ENCODE measurements at regions of chr11 and their contacts with region 1.

Region 1: GRCh38 chr11:95764267-95764898 is 25.2 kb downstream of the FAM76B start:
- DNase-seq: no peak
- H3K4me3 ChIP-seq: no peak overlapping the region
- H3K27ac ChIP-seq: no peak overlapping the region
- H3K4me1 ChIP-seq: no peaks in the 10 kb centered on the region
- H3K27me3 ChIP-seq: no peaks in the 10 kb centered on the region
- CTCF ChIP-seq: peak; percentile 46 to 85 (median 73)
- POLR2A ChIP-seq: no peak

Region 2: GRCh38 chr11:95150946-95151684 is 613.3 kb before region 1 on chr11:
- intact Hi-C with region 1: loop called (anchors 5 kb)
- DNase-seq: peak; percentile 68
- H3K4me3 ChIP-seq: peak overlapping the region; percentile 45 to 66 (median 64)
- H3K27ac ChIP-seq: peak overlapping the region; percentile 89 to 94 (median 93)
- H3K4me1 ChIP-seq: peaks cover 8 to 67% (median 25%) of the 10 kb centered on the region in 3 donors
- H3K27me3 ChIP-seq: no peaks in the 10 kb centered on the region
- CTCF ChIP-seq: peak; percentile 68 to 97 (median 95)
- POLR2A ChIP-seq: peak in 3 of 4 donors; percentile 5 to 81 (median 42)

Region 3: DNA sequence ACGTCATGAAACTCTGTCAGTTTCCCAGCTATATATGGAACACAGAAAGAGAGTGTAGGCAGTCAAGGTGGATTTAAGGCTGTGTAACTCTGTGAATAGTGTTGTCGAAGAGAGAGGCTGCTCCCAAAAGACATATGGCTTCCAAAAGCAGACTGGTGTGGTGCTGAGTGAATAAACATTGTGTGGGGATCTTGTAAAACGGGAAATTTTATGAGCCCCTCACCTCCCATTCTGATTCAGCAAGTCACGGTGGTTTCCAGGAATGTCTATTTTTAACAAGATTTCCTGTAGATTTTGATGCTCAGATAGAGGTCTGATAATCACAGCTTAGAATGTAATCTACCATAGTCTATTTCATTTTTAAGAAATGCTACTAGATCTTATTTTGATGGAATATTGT is 601.3 kb before region 1 on chr11:
- intact Hi-C with region 1: loop called (anchors 5 kb)
- DNase-seq: no peak
- H3K4me3 ChIP-seq: no peak overlapping the region
- H3K27ac ChIP-seq: no peak overlapping the region
- H3K4me1 ChIP-seq: no peaks in the 10 kb centered on the region
- H3K27me3 ChIP-seq: no peaks in the 10 kb centered on the region
- CTCF ChIP-seq: no peak
- POLR2A ChIP-seq: no peak

Region 4: DNA sequence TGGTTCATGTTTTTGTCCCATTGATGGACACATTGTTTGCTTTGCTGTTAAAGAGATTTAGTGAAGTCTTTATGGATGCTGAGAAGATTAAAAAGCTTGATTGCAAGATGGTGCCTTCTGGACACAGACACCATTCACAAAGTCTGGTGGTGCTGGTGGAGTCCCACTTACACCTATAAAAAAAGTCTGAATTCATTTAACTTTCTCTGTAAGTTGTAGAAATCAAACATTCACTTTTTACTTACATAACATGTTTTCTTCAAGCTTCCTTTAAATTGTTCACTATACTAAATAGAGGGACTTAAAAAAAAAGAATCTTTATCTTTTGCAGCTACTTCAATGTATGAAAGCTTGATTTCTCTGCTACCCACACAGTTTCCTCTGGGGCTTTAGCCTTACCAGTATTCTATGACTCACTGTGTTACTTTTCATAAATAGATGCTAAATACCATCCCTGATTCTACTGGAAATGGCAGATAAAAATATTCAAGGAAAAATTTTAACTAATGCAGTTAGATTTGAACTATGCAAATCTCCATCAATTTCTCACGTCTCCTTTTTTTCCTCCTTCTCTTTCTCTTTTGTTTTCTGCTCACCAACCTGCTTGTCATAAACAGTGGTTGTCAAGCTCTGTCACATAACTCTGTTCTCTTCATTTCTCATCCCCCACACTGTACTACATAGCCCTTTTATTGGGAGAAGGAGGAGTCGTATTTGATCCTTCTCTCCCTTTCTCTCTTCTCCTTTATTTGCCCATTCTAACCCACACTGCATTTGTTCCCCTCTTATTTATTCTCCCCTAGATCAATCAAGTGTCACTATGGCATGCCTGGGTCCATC is 64.5 kb before region 1 on chr11:
- intact Hi-C with region 1: loop called (anchors 5 kb)
- DNase-seq: no peak
- H3K4me3 ChIP-seq: no peak overlapping the region
- H3K27ac ChIP-seq: peak overlapping the region in 3 of 4 donors; percentile 27 to 39 (median 31)
- H3K4me1 ChIP-seq: peaks cover 5 to 76% (median 31%) of the 10 kb centered on the region in 3 donors
- H3K27me3 ChIP-seq: no peaks in the 10 kb centered on the region
- CTCF ChIP-seq: no peak
- POLR2A ChIP-seq: no peak

Region 5: DNA sequence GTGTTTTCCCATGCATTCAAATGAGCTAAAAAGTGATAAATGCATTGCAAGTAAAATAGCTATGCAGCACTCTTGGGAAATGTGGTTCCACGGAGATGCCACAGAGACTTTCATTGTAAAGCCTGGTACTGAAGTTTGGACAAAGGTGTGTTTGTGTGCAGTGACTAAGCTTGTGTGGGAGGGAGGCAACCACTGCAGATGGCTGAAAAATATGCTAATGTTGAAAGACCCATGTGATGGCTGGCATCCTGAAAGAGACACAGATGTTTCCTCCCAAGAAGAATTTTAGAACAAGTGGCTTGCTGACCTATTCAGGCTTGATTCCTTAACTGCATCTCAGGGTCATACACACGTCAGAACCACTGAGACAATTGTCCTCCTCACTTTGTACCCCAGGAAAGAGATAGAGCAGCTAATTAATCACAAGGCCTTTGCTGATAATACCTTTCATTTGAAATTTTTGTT is 48.6 kb before region 1 on chr11:
- intact Hi-C with region 1: no loop called
- DNase-seq: no peak
- H3K4me3 ChIP-seq: no peak overlapping the region
- H3K27ac ChIP-seq: no peak overlapping the region
- H3K4me1 ChIP-seq: peaks cover 0 to 4% (median 0%) of the 10 kb centered on the region in 3 donors
- H3K27me3 ChIP-seq: no peaks in the 10 kb centered on the region
- CTCF ChIP-seq: no peak
- POLR2A ChIP-seq: no peak

Region 6: DNA sequence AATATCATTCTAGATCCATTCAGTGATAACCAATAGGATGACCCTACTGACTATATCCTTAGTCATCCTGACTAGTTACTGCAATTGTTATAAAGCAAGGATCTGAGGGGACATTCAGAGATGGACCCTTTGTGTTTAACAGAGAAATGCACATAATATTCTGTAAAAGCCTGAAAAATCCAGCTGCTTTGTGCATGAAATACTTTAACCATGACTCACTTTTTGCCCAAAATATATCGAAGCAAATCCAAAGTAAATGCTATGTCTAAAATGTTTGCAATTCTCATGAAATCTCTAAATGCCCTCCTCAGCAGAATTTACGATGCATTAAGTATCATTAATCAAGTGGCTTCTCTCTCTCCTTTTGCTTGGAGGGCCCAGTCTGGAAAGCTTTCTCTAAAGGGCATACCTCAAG is 338.3 kb after region 1 on chr11:
- intact Hi-C with region 1: no loop called
- DNase-seq: no peak
- H3K4me3 ChIP-seq: no peak overlapping the region
- H3K27ac ChIP-seq: no peak overlapping the region
- H3K4me1 ChIP-seq: peaks cover 0 to 59% (median 18%) of the 10 kb centered on the region in 3 donors
- H3K27me3 ChIP-seq: no peaks in the 10 kb centered on the region
- CTCF ChIP-seq: no peak
- POLR2A ChIP-seq: no peak

Measured in esophagus squamous epithelium (tissue), 5 donors.